ENCODE measurements at regions of chr1 and their contacts with region 1.

Region 1: GRCh38 chr1:51648180-51649109 is 31.6 kb downstream of the OSBPL9 start:
- DNase-seq: peak; percentile 71 to 94 (median 84)
- ATAC-seq: peak; percentile 90
- H3K4me3 ChIP-seq: no peak overlapping the region
- H3K27ac ChIP-seq: peak overlapping the region; percentile 77
- H3K4me1 ChIP-seq: peaks cover 15 to 37% of the 10 kb centered on the region in 2 experiments
- H3K27me3 ChIP-seq: no peaks in the 10 kb centered on the region
- CTCF ChIP-seq: no peak
- EP300 ChIP-seq: peak; percentile 27; the same call in 1 of the 2 replicates
- POLR2A ChIP-seq: no peak
- RAD21 ChIP-seq: peak in 1 of 2 experiments; percentile 37; a peak in 1 of 4 replicates

Region 2: DNA sequence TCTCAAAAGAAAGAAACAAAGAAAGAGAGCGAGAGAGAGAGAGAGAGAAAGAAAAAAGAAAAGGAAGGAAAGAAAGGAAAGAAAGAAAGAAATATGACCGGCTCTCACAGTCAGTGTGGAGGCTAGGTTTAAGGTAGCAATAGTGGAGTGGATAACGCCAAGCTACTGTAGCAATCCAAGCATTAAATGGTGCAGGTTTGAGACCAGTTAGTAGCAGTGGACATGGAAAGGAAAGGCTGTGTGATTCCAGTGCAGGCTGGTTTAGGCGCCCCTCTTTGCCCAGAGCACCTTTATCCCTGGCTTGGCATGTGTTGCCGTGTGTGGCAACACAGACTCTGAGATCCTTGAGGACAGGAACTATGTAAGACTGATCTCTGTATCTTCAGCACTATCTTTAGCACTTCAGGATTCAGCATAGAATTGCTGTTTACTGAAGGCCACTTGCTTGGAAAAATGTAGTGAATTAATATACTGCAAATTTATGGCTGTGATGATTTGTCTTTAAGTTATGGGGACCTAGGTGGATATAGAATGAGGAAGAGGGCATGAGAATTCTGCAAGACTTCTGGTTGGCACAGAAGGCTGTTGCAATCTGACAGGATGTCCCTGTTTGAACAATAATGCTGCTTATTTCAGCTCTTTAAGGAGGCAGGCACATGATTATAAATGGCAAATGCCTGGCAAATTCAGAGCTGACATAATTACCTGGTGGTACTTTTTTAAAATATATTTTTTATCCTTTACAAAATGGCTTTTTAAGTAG is 42.3 kb before region 1 on chr1:
- CTCF ChIA-PET with region 1: no interaction called
- POLR2A ChIA-PET with region 1: no interaction called
- in situ Hi-C with region 1: no loop called
- intact Hi-C with region 1: no loop called
- DNase-seq: no peak
- ATAC-seq: peak; percentile 40
- H3K4me3 ChIP-seq: no peak overlapping the region
- H3K27ac ChIP-seq: no peak overlapping the region
- H3K4me1 ChIP-seq: peaks cover 3 to 13% of the 10 kb centered on the region in 2 experiments; a peak in 3 of 5 replicates
- H3K27me3 ChIP-seq: no peaks in the 10 kb centered on the region
- CTCF ChIP-seq: no peak
- EP300 ChIP-seq: no peak
- POLR2A ChIP-seq: no peak
- RAD21 ChIP-seq: no peak

Region 3: DNA sequence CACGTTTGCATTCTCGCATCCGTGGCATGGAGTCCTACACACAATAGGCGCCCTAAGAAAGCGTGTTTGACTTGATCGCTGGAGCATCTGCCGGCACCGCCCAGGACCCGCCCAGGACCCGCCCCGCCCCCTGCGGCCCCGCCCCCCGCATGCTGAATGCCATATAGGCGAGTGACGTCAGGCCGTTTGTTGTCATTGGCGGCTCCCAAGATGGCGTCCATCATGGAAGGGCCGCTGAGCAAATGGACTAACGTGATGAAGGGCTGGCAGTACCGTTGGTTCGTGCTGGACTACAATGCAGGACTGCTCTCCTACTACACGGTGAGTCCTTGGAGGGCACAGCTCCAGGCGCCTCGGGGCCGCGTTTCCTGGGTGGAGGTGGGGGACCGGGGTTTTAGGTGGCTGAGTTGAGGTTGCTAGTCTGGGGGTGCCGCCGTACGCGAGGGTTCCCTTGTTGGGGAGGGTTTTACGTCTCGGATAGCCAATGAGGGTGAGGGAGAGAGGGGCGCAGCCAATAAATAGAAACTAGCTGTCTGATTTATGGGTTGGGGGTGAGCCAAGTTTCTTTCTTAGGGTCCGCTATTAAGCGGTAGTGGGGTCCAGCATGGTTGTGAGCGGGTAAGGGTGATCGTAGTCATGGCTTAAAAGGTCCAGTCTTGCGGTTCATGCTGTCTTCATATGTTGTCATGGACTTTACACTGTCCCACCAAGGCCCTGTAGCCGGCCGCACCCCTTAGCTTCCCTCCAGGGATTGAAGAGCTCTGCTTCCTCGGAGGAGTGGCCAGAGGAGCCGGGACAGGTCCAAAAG is 31.3 kb before region 1 on chr1 and contains the start of gene OSBPL9:
- CTCF ChIA-PET with region 1: no interaction called
- POLR2A ChIA-PET with region 1: interaction called, 10 read pairs
- in situ Hi-C with region 1: no loop called
- intact Hi-C with region 1: no loop called
- DNase-seq: peak; percentile 95 to 97 (median 96)
- ATAC-seq: peak; percentile 90
- H3K4me3 ChIP-seq: peak within 1 kb of the TSS; percentile 86
- H3K27ac ChIP-seq: peak within 1 kb of the TSS; percentile 94
- H3K4me1 ChIP-seq: peaks cover 16 to 40% of the 10 kb centered on the region in 2 experiments
- H3K27me3 ChIP-seq: no peaks in the 10 kb centered on the region
- CTCF ChIP-seq: no peak; a peak in 1 of 6 replicates
- EP300 ChIP-seq: no peak
- POLR2A ChIP-seq: peak; percentile 95
- RAD21 ChIP-seq: no peak
- polyA plus RNA-seq, gene OSBPL9: 43.9 to 66.2 TPM

Region 4: GRCh38 chr1:51627678-51628077 is 20.8 kb before region 1 on chr1:
- CTCF ChIA-PET with region 1: no interaction called
- POLR2A ChIA-PET with region 1: interaction called, 12 read pairs
- in situ Hi-C with region 1: no loop called
- intact Hi-C with region 1: no loop called
- DNase-seq: peak in 2 of 4 experiments; percentile 63 to 80
- ATAC-seq: peak; percentile 71
- H3K4me3 ChIP-seq: no peak overlapping the region
- H3K27ac ChIP-seq: no peak overlapping the region
- H3K4me1 ChIP-seq: peaks cover 21 to 35% of the 10 kb centered on the region in 2 experiments
- H3K27me3 ChIP-seq: no peaks in the 10 kb centered on the region
- CTCF ChIP-seq: peak; percentile 65 to 83 (median 72)
- EP300 ChIP-seq: no peak
- POLR2A ChIP-seq: no peak
- RAD21 ChIP-seq: peak; percentile 70 to 91

Region 5: DNA sequence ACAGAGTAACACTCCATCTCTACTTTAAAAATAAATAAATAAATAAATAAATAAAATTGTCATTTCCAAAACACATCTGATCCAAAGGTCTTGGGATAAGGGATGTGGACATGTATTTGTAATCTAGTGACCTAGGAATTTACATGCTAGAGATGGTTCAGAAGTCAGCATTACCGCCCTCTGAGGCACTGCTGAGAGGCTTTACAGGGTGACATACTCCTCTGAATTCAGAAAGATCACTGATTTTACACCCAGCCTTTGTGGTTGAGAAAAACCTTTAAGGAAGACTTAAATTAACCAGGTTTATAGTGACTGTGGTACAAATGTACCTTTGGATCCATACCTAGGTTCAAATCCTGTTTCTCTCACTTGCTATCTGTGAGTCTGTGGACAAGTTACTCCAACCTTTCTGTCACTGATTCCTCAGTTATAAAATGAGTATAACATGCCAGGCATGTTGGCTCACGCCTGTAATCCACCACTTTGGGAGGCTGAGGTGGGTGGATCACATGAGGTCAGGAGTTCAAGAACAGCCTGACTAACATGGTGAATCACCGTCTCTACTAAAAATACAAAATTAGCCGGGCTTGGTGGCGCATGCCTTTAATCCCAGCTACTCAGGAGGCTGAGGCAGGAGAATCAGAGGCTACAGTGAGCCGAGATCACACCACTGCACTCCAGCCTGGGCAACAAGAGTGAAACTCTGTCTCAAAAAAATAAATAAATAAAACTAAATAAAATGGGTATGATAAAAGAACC is 11.5 kb before region 1 on chr1:
- CTCF ChIA-PET with region 1: no interaction called
- POLR2A ChIA-PET with region 1: interaction called, 23 read pairs
- in situ Hi-C with region 1: no loop called
- intact Hi-C with region 1: no loop called
- DNase-seq: peak in 1 of 4 experiments; percentile 61
- ATAC-seq: peak; percentile 16
- H3K4me3 ChIP-seq: no peak overlapping the region
- H3K27ac ChIP-seq: peak overlapping the region; percentile 32; the same call in 2 of the 3 replicates
- H3K4me1 ChIP-seq: peaks cover 3 to 19% of the 10 kb centered on the region in 2 experiments; a peak in 3 of 5 replicates
- H3K27me3 ChIP-seq: no peaks in the 10 kb centered on the region
- CTCF ChIP-seq: no peak
- EP300 ChIP-seq: no peak
- POLR2A ChIP-seq: no peak
- RAD21 ChIP-seq: no peak

Region 6: DNA sequence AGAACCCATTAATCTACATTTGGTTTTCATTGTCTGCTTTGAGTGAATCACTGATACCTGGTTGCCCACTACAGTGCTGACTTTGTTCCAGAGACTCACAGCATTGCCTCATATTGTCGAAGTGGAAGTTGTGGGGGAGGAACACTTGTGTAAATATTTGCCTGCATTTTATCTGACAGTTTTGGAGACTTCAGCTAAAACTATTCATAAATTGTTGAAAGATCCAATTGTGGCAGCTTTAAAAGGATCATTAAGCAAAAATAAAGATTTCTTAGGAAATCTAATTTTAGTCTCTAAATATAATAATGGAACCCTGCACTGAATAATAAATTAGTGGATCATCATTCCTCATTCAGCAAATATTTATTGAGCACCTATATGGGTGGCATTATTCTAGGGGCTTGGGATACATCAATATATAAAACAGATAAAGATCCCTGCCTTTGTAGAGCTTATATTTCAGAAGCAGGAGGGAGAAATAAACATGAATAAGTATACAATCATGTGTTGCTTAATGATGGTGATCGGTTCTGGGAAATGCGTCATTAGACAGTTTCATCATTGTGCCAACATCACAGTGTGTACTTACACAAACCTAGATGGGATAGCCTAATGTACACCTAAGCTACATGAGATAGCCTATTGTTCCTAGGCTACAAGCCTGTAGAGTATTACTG is 42.0 kb after region 1 on chr1:
- CTCF ChIA-PET with region 1: no interaction called
- POLR2A ChIA-PET with region 1: no interaction called
- in situ Hi-C with region 1: no loop called
- intact Hi-C with region 1: no loop called
- DNase-seq: peak in 1 of 4 experiments; percentile 43
- ATAC-seq: peak; percentile 46
- H3K4me3 ChIP-seq: no peak overlapping the region
- H3K27ac ChIP-seq: no peak overlapping the region
- H3K4me1 ChIP-seq: peaks cover 2 to 9% of the 10 kb centered on the region in 2 experiments; a peak in 3 of 5 replicates
- H3K27me3 ChIP-seq: no peaks in the 10 kb centered on the region
- CTCF ChIP-seq: no peak
- EP300 ChIP-seq: 0 out of 2 replicates have a peak, but pooled peaks have one; percentile 23
- POLR2A ChIP-seq: no peak
- RAD21 ChIP-seq: no peak

Region 7: GRCh38 chr1:51729156-51729823 is 80.8 kb after region 1 on chr1:
- CTCF ChIA-PET with region 1: no interaction called
- POLR2A ChIA-PET with region 1: interaction called, 6 read pairs
- in situ Hi-C with region 1: no loop called
- intact Hi-C with region 1: loop called (anchors 5 kb)
- DNase-seq: peak; percentile 99 to 100 (median 100)
- ATAC-seq: peak; percentile 84
- H3K4me3 ChIP-seq: peak overlapping the region; percentile 73
- H3K27ac ChIP-seq: peak overlapping the region; percentile 88
- H3K4me1 ChIP-seq: peaks cover 28 to 34% of the 10 kb centered on the region in 2 experiments
- H3K27me3 ChIP-seq: no peaks in the 10 kb centered on the region
- CTCF ChIP-seq: no peak
- EP300 ChIP-seq: peak; percentile 32; the same call in 1 of the 2 replicates
- POLR2A ChIP-seq: peak; percentile 94
- RAD21 ChIP-seq: 0 out of 4 replicates have a peak, but pooled peaks of 1 of the 2 experiments have one; percentile 10